Heart left ventricle (tissue), 16 donors: ENCODE measurements at regions of chr1 and their contacts with region 1.

Region 1: DNA sequence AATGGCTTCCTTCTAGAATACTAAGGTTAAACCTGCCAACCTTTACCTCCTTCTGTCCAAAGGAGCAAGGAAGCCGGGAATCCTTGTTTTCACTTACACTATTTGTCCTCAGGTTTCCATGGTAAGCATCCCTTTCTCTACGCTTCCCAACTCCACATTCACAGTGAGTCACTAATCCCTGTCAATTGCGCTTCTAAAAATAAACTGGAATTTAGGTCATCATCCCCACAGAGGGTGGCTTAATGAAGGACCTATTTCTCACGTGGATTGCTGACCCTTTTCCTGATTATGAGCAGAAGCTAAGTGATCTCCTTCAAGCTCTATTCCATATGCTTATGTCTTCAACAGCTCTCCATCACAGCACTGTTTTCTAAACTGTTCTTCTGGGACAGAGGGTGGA is 39.9 kb upstream of the ABCA4 start:
- DNase-seq: no peak
- ATAC-seq: peak; percentile 67 to 96 (median 85)
- H3K4me3 ChIP-seq: no peak overlapping the region
- H3K27ac ChIP-seq: peak overlapping the region in 1 of 12 donors; percentile 21
- H3K4me1 ChIP-seq: peaks cover 0 to 15% (median 11%) of the 10 kb centered on the region in 12 donors
- H3K27me3 ChIP-seq: no peaks in the 10 kb centered on the region
- CTCF ChIP-seq: no peak
- POLR2A ChIP-seq: no peak

Region 2: GRCh38 chr1:94095112-94095637 is 65.6 kb before region 1 on chr1:
- intact Hi-C with region 1: loop called in 1 of 10 experiments (anchors 10 kb)
- DNase-seq: peak; percentile 87 to 93 (median 89)
- ATAC-seq: peak; percentile 64 to 85 (median 83)
- H3K4me3 ChIP-seq: peak overlapping the region in 3 of 12 donors; percentile 0 to 23 (median 16)
- H3K27ac ChIP-seq: peak overlapping the region; percentile 70 to 94 (median 82)
- H3K4me1 ChIP-seq: peaks cover 0 to 79% (median 62%) of the 10 kb centered on the region in 12 donors
- H3K27me3 ChIP-seq: peaks cover 0 to 7% (median 0%) of the 10 kb centered on the region in 9 donors
- CTCF ChIP-seq: peak in 2 of 12 donors; percentile 2 to 8
- POLR2A ChIP-seq: no peak